MCF 10A (cell line): ENCODE measurements at regions of chr2 and their contacts with region 1.

Region 1: GRCh38 chr2:178414266-178415247 is 36.4 kb downstream of the PRKRA start:
- DNase-seq: peak; percentile 98
- H3K4me3 Mint-ChIP-seq: peak overlapping the region; percentile 96
- H3K27ac Mint-ChIP-seq: peak overlapping the region; percentile 91
- H3K4me1 Mint-ChIP-seq: peaks cover 27% of the 10 kb centered on the region
- H3K27me3 Mint-ChIP-seq: no peaks in the 10 kb centered on the region
- CTCF ChIP-seq: peak; percentile 71

Region 2: GRCh38 chr2:177983183-177983788 is 431.3 kb before region 1 on chr2:
- CTCF ChIA-PET with region 1: interaction called, 13 read pairs
- POLR2A ChIA-PET with region 1: interaction called, 3 read pairs
- intact Hi-C with region 1: loop called (anchors 5 kb)
- DNase-seq: peak; percentile 76
- H3K4me3 Mint-ChIP-seq: no peak overlapping the region
- H3K27ac Mint-ChIP-seq: no peak overlapping the region
- H3K4me1 Mint-ChIP-seq: no peaks in the 10 kb centered on the region
- H3K27me3 Mint-ChIP-seq: peaks cover 26% of the 10 kb centered on the region
- CTCF ChIP-seq: peak; percentile 65

Region 3: GRCh38 chr2:178193823-178194599 is 220.5 kb before region 1 on chr2 and contains the start of gene OSBPL6:
- CTCF ChIA-PET with region 1: interaction called, 19 read pairs
- POLR2A ChIA-PET with region 1: interaction called, 26 read pairs
- intact Hi-C with region 1: loop called (anchors 2 kb)
- DNase-seq: peak; percentile 84
- H3K4me3 Mint-ChIP-seq: peak within 1 kb of the TSS; percentile 87
- H3K27ac Mint-ChIP-seq: no peak within 1 kb of the TSS
- H3K4me1 Mint-ChIP-seq: peaks cover 21% of the 10 kb centered on the region
- H3K27me3 Mint-ChIP-seq: no peaks in the 10 kb centered on the region
- CTCF ChIP-seq: peak; percentile 9
- total RNA-seq, gene OSBPL6: 26.2 and 43.1 TPM in 2 replicates

Region 4: DNA sequence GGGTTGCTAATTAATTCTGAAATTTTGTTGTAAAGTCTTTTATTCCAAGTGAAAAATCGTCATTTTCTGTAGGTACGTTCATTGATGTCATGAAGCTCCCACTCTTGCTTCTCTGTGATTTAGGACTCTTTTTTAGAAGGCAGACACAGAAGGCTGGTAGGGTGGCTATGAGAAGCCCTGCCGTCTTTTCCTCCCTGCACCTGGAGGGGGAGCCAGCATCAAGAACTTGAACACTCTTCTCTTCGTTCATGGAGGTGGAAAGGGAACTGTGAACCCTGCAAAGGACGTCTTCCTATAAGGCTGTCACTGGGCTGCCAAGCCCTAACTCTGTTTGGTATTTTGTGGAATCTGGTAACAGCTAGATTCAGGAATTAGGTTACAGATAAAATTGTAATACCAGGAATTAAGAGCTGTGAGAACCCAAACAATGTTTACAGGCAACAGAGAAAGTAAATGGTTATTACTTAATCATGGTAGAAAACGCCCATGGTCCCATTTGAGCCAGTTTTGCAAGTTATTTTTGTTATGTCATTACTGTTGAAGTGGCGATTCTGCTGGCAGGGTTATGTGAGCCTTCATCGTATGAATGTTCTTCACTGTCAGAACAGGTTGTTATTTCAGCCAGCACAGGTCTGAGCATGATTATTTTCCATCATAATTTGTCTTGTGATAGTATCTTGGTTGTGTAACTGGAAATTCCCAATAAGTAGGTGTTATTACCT is 108.0 kb before region 1 on chr2:
- CTCF ChIA-PET with region 1: interaction called, 19 read pairs
- POLR2A ChIA-PET with region 1: interaction called, 12 read pairs
- intact Hi-C with region 1: loop called (anchors 2 kb)
- DNase-seq: peak; percentile 70
- H3K4me3 Mint-ChIP-seq: no peak overlapping the region
- H3K27ac Mint-ChIP-seq: no peak overlapping the region
- H3K4me1 Mint-ChIP-seq: peaks cover 16% of the 10 kb centered on the region
- H3K27me3 Mint-ChIP-seq: no peaks in the 10 kb centered on the region
- CTCF ChIP-seq: peak; percentile 54

Region 5: GRCh38 chr2:178404368-178404767 is 10.2 kb before region 1 on chr2:
- CTCF ChIA-PET with region 1: interaction called, 101 read pairs
- POLR2A ChIA-PET with region 1: interaction called, 31 read pairs
- intact Hi-C with region 1: no loop called
- DNase-seq: peak; percentile 53
- H3K4me3 Mint-ChIP-seq: no peak overlapping the region
- H3K27ac Mint-ChIP-seq: no peak overlapping the region
- H3K4me1 Mint-ChIP-seq: peaks cover 9% of the 10 kb centered on the region
- H3K27me3 Mint-ChIP-seq: no peaks in the 10 kb centered on the region
- CTCF ChIP-seq: no peak

Region 6: GRCh38 chr2:178707476-178707875 is 292.9 kb after region 1 on chr2:
- CTCF ChIA-PET with region 1: no interaction called
- POLR2A ChIA-PET with region 1: no interaction called
- intact Hi-C with region 1: no loop called
- DNase-seq: no peak
- H3K4me3 Mint-ChIP-seq: no peak overlapping the region
- H3K27ac Mint-ChIP-seq: no peak overlapping the region
- H3K4me1 Mint-ChIP-seq: no peaks in the 10 kb centered on the region
- H3K27me3 Mint-ChIP-seq: peaks cover 78% of the 10 kb centered on the region
- CTCF ChIP-seq: no peak